Stomach (tissue), 19 donors: ENCODE measurements at regions of chrX and their contacts with region 1.

Region 1: DNA sequence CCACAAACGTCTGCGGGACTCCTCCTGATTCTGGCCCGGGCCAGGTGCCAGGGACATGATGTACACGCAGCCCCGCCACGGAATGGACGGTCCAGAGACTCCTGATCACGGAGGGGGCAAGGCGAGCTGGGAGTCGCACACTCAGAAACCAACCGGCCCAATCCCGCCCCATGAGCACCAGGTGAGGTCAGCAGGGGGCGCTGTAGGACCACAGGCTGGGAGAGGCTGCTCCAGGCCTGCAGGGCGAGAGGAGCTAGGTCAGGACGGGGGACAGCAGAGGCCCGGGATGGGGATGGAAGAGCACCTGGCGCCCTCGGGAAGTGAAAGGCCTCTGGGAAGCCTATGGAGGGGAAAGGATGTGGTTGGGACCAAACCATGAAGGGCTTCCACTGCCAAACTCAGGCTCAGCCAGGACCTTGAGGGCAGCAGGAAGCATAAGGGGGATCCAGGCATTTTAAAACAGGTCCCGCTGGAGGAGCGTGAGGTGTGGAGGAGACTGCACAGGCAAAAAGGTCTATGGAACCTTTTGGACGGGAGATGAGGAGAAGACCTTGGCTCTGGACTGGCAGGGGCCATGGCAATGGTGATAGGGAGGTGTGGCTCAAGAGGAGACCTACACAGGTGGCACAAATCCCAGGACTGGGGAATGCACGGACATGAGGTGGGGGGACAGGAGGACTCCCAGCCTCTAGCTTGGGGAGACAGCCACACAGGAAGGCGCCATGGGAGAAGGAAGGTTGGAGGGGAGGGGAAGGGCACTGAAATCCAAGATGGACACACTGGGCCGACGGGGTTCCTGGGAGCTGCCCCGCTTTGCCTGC is 79.2 kb downstream of the MTMR1 start:
- DNase-seq: peak; percentile 81 to 85
- H3K4me3 ChIP-seq: no peak overlapping the region
- H3K27ac ChIP-seq: no peak overlapping the region
- H3K4me1 ChIP-seq: peaks cover 0 to 2% (median under 1%) of the 10 kb centered on the region in 4 donors
- H3K27me3 ChIP-seq: no peaks in the 10 kb centered on the region
- CTCF ChIP-seq: peak in 5 of 7 experiments; percentile 57 to 79 (median 71)
- EP300 ChIP-seq: no peak
- POLR2A ChIP-seq: no peak

Region 2: GRCh38 chrX:151082076-151082948 is 310.0 kb after region 1 on chrX:
- intact Hi-C with region 1: loop called (anchors 5 kb)
- DNase-seq: peak; percentile 65 to 80
- H3K4me3 ChIP-seq: peak overlapping the region in 2 of 4 donors; percentile 5 to 13
- H3K27ac ChIP-seq: no peak overlapping the region
- H3K4me1 ChIP-seq: peaks cover 0 to 10% (median 7%) of the 10 kb centered on the region in 4 donors
- H3K27me3 ChIP-seq: peaks cover 0 to 18% (median 0%) of the 10 kb centered on the region in 3 donors
- CTCF ChIP-seq: peak in 5 of 7 experiments; percentile 72 to 96 (median 89)
- EP300 ChIP-seq: no peak
- POLR2A ChIP-seq: no peak